ENCODE measurements at regions of chr1 and their contacts with region 1.

Region 1: GRCh38 chr1:49187056-49187455 is 410.4 kb upstream of the BEND5 start:
- DNase-seq: no peak
- H3K4me3 ChIP-seq: no peak overlapping the region
- H3K27ac ChIP-seq: peak overlapping the region in 33 of 59 donors; percentile 7 to 76 (median 44)
- H3K27me3 ChIP-seq: no peaks in the 10 kb centered on the region
- CTCF ChIP-seq: no peak

Region 2: GRCh38 chr1:50332941-50333594 is 1146.0 kb after region 1 on chr1:
- intact Hi-C with region 1: loop called in 1 of 2 experiments (anchors 10 kb)
- DNase-seq: peak in 6 of 10 donors; percentile 17 to 78 (median 56)
- H3K4me3 ChIP-seq: peak overlapping the region; percentile 12 to 72 (median 55)
- H3K27ac ChIP-seq: peak overlapping the region in 55 of 59 donors; percentile 27 to 93 (median 81)
- H3K27me3 ChIP-seq: peaks cover 0 to 24% (median 0%) of the 10 kb centered on the region in 45 donors
- CTCF ChIP-seq: peak; percentile 45 to 86 (median 75)

Measured in dorsolateral prefrontal cortex (tissue), 120 donors.